Transverse colon (tissue), 4 donors: ENCODE measurements at regions of chr15 and their contacts with region 1.

Region 1: GRCh38 chr15:62572797-62573196 is 407.7 kb upstream of the C2CD4B start:
- DNase-seq: no peak
- H3K4me3 ChIP-seq: no peak overlapping the region
- H3K27ac ChIP-seq: no peak overlapping the region
- H3K4me1 ChIP-seq: peaks cover 9 to 35% (median 33%) of the 10 kb centered on the region in 4 donors
- H3K27me3 ChIP-seq: no peaks in the 10 kb centered on the region
- CTCF ChIP-seq: no peak
- EP300 ChIP-seq: no peak
- POLR2A ChIP-seq: no peak

Region 2: GRCh38 chr15:62591842-62592838 is 19.3 kb after region 1 on chr15:
- in situ Hi-C with region 1: no loop called
- intact Hi-C with region 1: loop called (anchors 1 kb)
- DNase-seq: no peak
- H3K4me3 ChIP-seq: no peak overlapping the region
- H3K27ac ChIP-seq: peak overlapping the region in 3 of 4 donors; percentile 9 to 59 (median 19)
- H3K4me1 ChIP-seq: peaks cover 13 to 43% (median 39%) of the 10 kb centered on the region in 4 donors
- H3K27me3 ChIP-seq: no peaks in the 10 kb centered on the region
- CTCF ChIP-seq: no peak
- EP300 ChIP-seq: no peak
- POLR2A ChIP-seq: no peak

Region 3: GRCh38 chr15:62649793-62650420 is 77.1 kb after region 1 on chr15:
- in situ Hi-C with region 1: no loop called
- intact Hi-C with region 1: no loop called
- DNase-seq: no peak
- H3K4me3 ChIP-seq: no peak overlapping the region
- H3K27ac ChIP-seq: no peak overlapping the region
- H3K4me1 ChIP-seq: peaks cover 0 to 11% (median 2%) of the 10 kb centered on the region in 4 donors
- H3K27me3 ChIP-seq: no peaks in the 10 kb centered on the region
- CTCF ChIP-seq: no peak
- EP300 ChIP-seq: no peak
- POLR2A ChIP-seq: no peak